OCI-LY7 (cell line): ENCODE measurements at regions of chr1 and their contacts with region 1.

Region 1: DNA sequence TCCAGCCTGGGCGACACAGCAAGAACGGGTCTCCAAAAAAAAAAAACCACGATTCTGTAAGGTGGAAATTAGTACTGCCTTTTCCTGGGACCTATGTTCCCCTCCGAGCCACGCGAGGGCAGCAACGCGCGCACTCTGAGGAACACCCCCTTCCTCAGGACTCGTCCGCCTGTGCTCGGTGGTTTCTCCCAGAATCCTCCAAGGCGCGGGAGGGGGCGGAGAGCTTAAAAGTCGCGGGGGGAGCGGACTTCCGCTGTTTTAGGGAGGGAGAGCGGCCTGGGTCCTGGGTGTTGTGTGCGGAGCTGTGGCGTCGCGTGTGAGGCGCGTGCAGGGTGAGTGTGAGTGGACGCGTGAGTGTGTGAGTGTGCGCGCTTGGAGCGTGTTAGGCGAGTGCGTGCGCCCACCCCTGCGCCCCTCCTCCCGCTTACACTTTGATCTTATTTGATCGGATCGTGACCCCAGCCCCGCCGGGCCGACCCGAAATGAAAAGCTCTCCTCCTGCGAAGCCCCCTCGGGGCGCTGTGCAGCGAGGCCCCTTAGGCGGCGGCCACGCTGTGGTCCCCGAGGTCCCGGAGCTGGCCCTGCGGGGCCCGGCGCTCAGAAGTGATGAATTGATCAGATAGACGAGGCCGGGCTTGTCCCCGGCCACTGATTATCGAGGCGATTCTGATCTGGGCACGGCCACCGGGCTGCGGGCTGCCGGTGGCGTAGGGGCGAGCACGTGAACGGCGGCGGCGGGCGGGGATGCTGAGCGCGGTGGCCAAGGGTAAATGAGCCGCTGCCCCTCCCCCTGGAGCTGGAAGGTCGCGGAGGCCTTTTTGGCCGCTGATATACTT is 9.6 kb downstream of the TMEM167B start:
- DNase-seq: peak; percentile 99
- H3K4me3 ChIP-seq: peak overlapping the region; percentile 98
- H3K27ac ChIP-seq: peak overlapping the region; percentile 64
- H3K4me1 ChIP-seq: peaks cover 9% of the 10 kb centered on the region
- CTCF ChIP-seq: peak; percentile 86

Region 2: GRCh38 chr1:108691942-108692723 is 408.0 kb before region 1 on chr1 and contains the start of gene PRPF38B:
- CTCF ChIA-PET with region 1: interaction called, 3 read pairs
- POLR2A ChIA-PET with region 1: interaction called, 4 read pairs
- intact Hi-C with region 1: loop called (anchors 10 kb)
- DNase-seq: peak; percentile 94
- H3K4me3 ChIP-seq: peak within 1 kb of the TSS; percentile 97
- H3K27ac ChIP-seq: peak within 1 kb of the TSS; percentile 83
- H3K4me1 ChIP-seq: peaks cover 28% of the 10 kb centered on the region
- CTCF ChIP-seq: no peak
- total RNA-seq, gene PRPF38B: 37.7 and 47.4 TPM in 2 replicates

Region 3: GRCh38 chr1:108963052-108963686 is 137.0 kb before region 1 on chr1 and contains the start of gene CLCC1:
- CTCF ChIA-PET with region 1: no interaction called
- POLR2A ChIA-PET with region 1: interaction called, 3 read pairs
- intact Hi-C with region 1: loop called (anchors 5 kb)
- DNase-seq: peak; percentile 95
- H3K4me3 ChIP-seq: peak within 1 kb of the TSS; percentile 72
- H3K27ac ChIP-seq: peak within 1 kb of the TSS; percentile 76
- H3K4me1 ChIP-seq: peaks cover 17% of the 10 kb centered on the region
- CTCF ChIP-seq: no peak
- total RNA-seq, gene CLCC1: 8.7 and 9.8 TPM in 2 replicates

Region 4: GRCh38 chr1:109034382-109034781 is 65.8 kb before region 1 on chr1:
- CTCF ChIA-PET with region 1: no interaction called
- POLR2A ChIA-PET with region 1: no interaction called
- intact Hi-C with region 1: loop called (anchors 5 kb)
- DNase-seq: no peak
- H3K4me3 ChIP-seq: no peak overlapping the region
- H3K27ac ChIP-seq: no peak overlapping the region
- H3K4me1 ChIP-seq: no peaks in the 10 kb centered on the region
- CTCF ChIP-seq: no peak

Region 5: DNA sequence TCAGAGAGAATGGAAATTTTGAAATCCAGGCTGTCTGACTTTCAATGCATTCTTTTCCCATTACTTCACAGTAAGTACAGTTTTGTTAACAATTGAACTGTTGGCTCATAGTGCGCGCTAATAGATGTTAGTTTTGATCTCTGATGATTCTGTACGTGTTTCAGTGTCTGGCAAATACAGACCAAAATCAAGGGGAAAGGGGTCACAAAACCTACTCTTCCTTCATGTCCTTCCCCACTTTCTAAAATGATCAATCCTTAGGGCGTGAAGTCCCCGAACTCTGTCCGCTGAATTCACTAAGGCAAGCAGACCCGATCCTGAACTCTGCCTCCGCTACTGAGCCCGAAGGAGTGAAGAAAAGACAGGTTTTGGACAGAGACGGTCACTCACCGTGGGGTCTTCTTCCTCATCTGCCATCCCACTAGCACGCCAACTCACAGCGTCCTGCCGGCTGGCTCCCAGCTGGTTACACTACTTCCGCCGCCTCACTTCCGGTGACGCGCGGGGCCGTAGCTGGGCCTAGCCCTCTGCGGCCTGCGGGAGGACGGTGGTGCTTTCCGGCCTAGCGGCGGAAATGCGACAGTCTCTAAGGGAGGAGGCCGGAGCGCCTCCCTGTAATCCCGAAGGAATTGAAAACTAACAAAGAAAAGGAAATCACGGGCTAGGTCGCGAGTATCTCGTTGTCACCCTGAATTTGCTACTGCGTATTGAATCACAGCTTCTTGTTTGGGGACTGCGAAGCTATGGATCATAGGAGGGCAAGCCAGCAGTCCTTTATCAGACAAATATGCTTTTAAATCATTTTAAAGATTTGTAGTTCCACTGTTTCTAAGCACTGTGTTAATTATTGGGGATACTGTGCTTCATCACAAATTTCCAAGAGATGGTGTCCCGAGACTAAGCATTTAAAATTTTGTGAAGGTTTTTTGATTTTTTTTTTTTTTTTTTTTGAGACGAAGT is 24.3 kb before region 1 on chr1 and contains the start of gene TAF13:
- CTCF ChIA-PET with region 1: interaction called, 5 read pairs
- POLR2A ChIA-PET with region 1: interaction called, 12 read pairs
- intact Hi-C with region 1: loop called (anchors 1 kb)
- DNase-seq: peak; percentile 96
- H3K4me3 ChIP-seq: peak within 1 kb of the TSS; percentile 82
- H3K27ac ChIP-seq: peak within 1 kb of the TSS; percentile 68
- H3K4me1 ChIP-seq: peaks cover 29% of the 10 kb centered on the region
- CTCF ChIP-seq: 0 out of 2 replicates have a peak, but pooled peaks have one; percentile 17
- total RNA-seq, gene TAF13: 7.6 and 8.3 TPM in 2 replicates

Region 6: GRCh38 chr1:109112652-109113285 is 12.6 kb after region 1 on chr1:
- CTCF ChIA-PET with region 1: no interaction called
- POLR2A ChIA-PET with region 1: interaction called, 15 read pairs
- intact Hi-C with region 1: loop called (anchors 1 kb)
- DNase-seq: peak; percentile 83
- H3K4me3 ChIP-seq: peak overlapping the region; percentile 16
- H3K27ac ChIP-seq: no peak overlapping the region
- H3K4me1 ChIP-seq: peaks cover 13% of the 10 kb centered on the region
- CTCF ChIP-seq: peak; percentile 95

Region 7: GRCh38 chr1:109426278-109427170 is 326.4 kb after region 1 on chr1 and contains the start of gene PSMA5:
- CTCF ChIA-PET with region 1: no interaction called
- POLR2A ChIA-PET with region 1: interaction called, 3 read pairs
- intact Hi-C with region 1: loop called (anchors 10 kb)
- DNase-seq: peak; percentile 99
- H3K4me3 ChIP-seq: peak within 1 kb of the TSS; percentile 97
- H3K27ac ChIP-seq: peak within 1 kb of the TSS; percentile 85
- H3K4me1 ChIP-seq: peaks cover 25% of the 10 kb centered on the region
- CTCF ChIP-seq: no peak
- total RNA-seq, gene PSMA5: 46.3 and 53.3 TPM in 2 replicates